ENCODE measurements at regions of chr18 and their contacts with region 1.

Region 1: GRCh38 chr18:79988451-79989194 is at the start of gene TXNL4A:
- DNase-seq: peak; percentile 67 to 70
- H3K4me3 ChIP-seq: peak within 1 kb of the TSS; percentile 88
- H3K27ac ChIP-seq: peak within 1 kb of the TSS; percentile 82
- H3K4me1 ChIP-seq: peaks cover 23% of the 10 kb centered on the region
- H3K27me3 ChIP-seq: no peaks in the 10 kb centered on the region
- CTCF ChIP-seq: no peak
- total RNA-seq, gene TXNL4A: 106 and 120 TPM in 2 replicates

Region 2: DNA sequence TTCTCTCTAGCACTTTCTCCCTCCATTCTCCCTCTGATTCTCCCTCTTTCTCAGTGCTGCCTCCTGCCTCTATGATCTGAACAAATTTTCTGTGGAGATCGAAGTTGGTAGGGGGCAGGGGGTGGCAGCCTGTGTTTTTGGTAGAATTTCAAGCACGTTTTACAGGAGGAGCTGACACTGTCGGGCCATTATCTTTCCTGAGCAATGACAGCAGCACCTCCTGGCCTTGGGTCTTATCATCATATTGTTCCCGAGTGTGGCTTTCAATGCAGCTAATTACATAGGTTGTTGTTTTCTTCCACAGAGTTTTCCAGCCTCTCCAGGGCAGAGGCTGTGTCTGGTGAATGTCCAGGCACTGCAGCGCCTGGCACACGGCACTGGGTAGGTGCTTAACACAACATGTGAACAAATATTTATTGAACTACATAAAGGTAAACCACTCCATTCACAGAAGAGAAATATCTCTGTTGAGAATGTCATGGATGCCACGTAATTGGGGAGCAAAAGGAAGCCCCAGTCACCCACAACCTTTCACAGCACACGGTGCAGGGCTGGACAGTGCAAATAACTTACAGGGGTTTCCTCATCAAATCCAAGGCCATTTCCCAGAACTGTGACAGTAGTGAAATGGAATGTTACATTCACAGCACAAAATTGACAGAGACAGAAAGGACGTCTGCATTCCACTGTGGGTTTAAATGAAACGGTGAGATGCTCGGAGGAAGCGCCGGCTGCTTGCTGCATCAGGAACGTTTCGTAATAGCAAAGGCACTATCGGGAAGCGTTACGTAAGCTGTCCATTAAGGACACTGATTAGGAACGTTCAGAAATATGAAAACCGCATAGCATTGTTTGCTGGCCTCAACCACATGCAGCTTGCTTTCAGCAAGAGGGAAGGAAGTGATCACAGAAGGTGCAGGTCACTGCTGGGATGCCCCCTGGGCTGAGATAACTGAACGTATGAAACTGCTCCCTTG is 197.3 kb before region 1 on chr18:
- CTCF ChIA-PET with region 1: no interaction called
- POLR2A ChIA-PET with region 1: no interaction called
- intact Hi-C with region 1: no loop called
- DNase-seq: peak; percentile 63 to 94
- H3K4me3 ChIP-seq: peak overlapping the region; percentile 8; the same call in 1 of the 2 replicates
- H3K27ac ChIP-seq: no peak overlapping the region; the same call in 1 of the 2 replicates
- H3K4me1 ChIP-seq: peaks cover 17% of the 10 kb centered on the region
- H3K27me3 ChIP-seq: no peaks in the 10 kb centered on the region
- CTCF ChIP-seq: no peak

Region 3: DNA sequence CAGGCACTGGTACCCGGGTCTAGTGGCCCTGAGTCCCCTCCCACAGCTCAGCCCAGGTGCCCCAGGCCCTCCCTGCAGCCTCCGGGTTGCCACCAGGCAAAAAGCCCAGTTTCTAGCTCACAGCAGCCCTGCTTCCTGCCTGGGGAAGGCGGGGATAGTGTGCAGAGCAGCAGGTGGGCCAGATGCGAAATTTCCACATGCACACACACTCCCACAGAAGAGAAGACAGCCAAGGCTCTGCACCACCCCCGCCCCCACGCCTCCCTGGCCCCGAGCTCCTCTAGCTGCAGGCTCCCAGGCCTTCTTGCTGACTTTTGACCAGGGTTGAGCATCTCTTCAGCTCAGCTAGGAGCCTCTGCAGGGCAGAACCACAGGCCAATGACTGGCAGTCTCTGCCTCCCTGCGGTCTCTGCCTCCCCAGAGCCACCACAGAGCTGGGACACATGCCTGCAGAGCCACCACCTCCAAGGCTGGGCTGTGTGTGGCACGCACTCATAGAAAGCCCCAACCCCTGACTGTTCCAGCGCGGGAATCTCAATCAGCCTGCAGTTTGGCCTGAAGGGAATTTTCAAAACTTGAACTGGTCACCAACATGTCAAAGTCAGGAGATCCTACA is 44.4 kb before region 1 on chr18:
- CTCF ChIA-PET with region 1: no interaction called
- POLR2A ChIA-PET with region 1: no interaction called
- intact Hi-C with region 1: no loop called
- DNase-seq: no peak
- H3K4me3 ChIP-seq: no peak overlapping the region
- H3K27ac ChIP-seq: no peak overlapping the region
- H3K4me1 ChIP-seq: peaks cover 10% of the 10 kb centered on the region; the same call in 1 of the 2 replicates
- H3K27me3 ChIP-seq: no peaks in the 10 kb centered on the region
- CTCF ChIP-seq: no peak

Region 4: DNA sequence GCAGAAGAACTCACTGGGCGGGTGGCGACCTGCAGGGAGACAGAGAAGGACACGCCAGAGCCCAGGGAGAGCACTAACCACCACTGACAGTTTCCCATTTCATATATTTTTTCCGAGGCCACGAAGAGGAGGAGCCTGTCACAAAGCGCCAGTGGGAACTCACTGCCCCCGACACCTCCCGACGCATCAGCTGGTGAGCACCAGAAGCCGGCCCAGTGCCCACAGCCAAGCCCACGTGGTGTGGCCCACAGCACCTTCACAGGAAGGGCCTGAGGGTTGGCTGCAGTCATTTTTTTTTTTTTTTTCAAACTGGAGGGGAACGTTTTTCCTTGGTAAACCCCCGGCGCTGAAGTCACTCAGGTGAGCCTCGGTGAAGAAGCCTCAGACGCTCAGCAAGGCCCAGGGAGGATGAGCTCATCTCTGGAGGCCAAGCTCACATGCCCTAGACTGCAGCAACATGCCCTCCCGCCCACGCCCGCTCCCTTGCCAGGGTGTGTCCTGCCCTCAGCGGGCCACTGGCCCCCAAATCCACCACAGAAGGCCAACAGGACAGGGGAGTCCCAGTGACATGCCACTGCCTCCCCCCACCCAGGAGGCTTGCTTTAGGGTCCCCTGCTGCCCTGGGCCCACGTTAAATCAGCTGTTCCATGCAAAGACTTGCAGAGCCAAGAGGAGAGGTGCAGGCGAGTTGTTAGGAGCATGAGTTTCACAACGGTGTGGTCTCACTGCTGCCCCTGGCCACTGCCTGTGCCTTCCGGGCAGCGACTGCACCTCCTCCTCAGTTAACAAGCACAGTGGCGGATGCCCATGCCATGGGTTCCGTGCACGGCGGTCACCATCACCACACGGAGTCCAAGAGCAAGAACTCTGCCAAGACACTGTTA is 190.6 kb after region 1 on chr18:
- CTCF ChIA-PET with region 1: no interaction called
- POLR2A ChIA-PET with region 1: interaction called, 18 read pairs
- intact Hi-C with region 1: no loop called
- DNase-seq: no peak
- H3K4me3 ChIP-seq: no peak overlapping the region
- H3K27ac ChIP-seq: no peak overlapping the region
- H3K4me1 ChIP-seq: no peaks in the 10 kb centered on the region
- H3K27me3 ChIP-seq: peaks cover 95% of the 10 kb centered on the region
- CTCF ChIP-seq: no peak